Posterior vena cava (tissue), 2 donors: ENCODE measurements at regions of chr1 and their contacts with region 1.

Region 1: GRCh38 chr1:2988256-2988655 is 33.0 kb upstream of the ACTRT2 start:
- DNase-seq: no peak

Region 2: GRCh38 chr1:2962946-2963345 is 25.3 kb before region 1 on chr1:
- intact Hi-C with region 1: loop called in 1 of 2 experiments (anchors 1 kb)
- DNase-seq: peak; percentile 72

Region 3: GRCh38 chr1:3024019-3024418 is 35.8 kb after region 1 on chr1:
- intact Hi-C with region 1: no loop called
- DNase-seq: no peak